Dorsolateral prefrontal cortex (tissue), 120 donors: ENCODE measurements at regions of chr17 and their contacts with region 1.

Region 1: DNA sequence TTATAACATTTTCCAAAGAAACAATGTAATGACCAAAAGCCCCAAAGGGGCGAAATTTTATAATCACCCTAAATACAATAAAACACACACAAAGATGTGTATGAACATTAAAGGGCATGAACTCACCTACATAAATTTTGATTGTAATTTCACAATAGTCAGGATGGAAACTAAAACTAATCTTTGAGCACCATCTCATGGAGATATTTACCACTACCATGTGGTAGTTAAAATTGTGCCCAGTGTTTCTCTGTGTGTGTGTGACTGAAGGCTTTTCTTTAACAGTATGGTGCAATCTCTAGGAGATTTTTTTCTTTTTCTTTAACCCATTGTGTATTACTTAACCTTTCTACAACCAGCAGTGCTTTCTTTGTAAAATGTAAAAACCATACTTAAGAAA is 19.7 kb upstream of the MEIOC start:
- DNase-seq: no peak
- H3K4me3 ChIP-seq: no peak overlapping the region
- H3K27ac ChIP-seq: no peak overlapping the region
- H3K27me3 ChIP-seq: peaks cover 0 to 3% (median 0%) of the 10 kb centered on the region in 45 donors
- CTCF ChIP-seq: peak in 54 of 56 donors; percentile 14 to 80 (median 53)

Region 2: DNA sequence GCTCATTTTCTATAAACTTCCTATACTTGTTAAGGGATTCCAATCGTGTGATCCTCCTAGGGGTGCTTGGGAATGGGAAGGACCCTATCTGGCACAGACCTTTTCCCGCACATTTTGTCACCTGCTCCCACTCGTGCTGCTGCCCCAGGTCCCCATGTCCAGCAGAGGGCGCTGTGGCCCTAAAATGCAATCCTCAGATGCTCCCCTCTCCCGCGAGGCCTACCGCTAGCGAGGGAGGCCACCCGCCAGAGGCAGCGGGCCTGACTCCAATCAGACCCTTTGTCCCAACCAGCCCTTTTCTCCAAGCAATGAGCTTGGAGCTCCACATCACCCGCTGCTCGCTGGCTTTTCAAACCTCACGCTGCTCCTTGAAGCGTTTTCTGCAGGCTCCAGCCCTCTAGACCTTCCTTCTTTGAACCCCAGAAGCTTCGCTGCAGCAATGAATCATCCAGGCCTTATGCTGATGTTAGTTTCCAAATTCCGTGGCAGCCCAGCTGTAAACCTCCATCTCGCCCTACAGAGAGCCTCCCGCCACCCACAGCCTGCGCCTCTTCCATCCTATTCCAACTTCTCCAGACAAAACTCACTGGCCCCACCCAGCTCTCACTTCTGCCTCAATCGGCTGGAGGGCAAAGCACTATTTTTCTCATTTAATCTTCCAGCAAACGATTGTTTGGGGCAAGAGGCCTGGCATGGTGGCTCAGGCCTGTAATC is 102.9 kb before region 1 on chr17:
- intact Hi-C with region 1: loop called in 1 of 2 experiments (anchors 2 kb)
- DNase-seq: peak; percentile 20 to 81 (median 71)
- H3K4me3 ChIP-seq: peak overlapping the region in 10 of 59 donors; percentile 5 to 34 (median 20)
- H3K27ac ChIP-seq: peak overlapping the region in 12 of 59 donors; percentile 6 to 82 (median 32)
- H3K27me3 ChIP-seq: peaks cover 0 to 5% (median 0%) of the 10 kb centered on the region in 45 donors
- CTCF ChIP-seq: peak; percentile 61 to 97 (median 89)

Region 3: GRCh38 chr17:44543213-44543904 is 93.2 kb before region 1 on chr17:
- intact Hi-C with region 1: loop called in 1 of 2 experiments (anchors 10 kb)
- DNase-seq: no peak
- H3K4me3 ChIP-seq: no peak overlapping the region
- H3K27ac ChIP-seq: peak overlapping the region in 4 of 59 donors; percentile 6 to 58 (median 27)
- H3K27me3 ChIP-seq: peaks cover 0 to 47% (median 8%) of the 10 kb centered on the region in 45 donors
- CTCF ChIP-seq: no peak